T-cell (primary cell): ENCODE measurements at regions of chr5 and their contacts with region 1.

Region 1: DNA sequence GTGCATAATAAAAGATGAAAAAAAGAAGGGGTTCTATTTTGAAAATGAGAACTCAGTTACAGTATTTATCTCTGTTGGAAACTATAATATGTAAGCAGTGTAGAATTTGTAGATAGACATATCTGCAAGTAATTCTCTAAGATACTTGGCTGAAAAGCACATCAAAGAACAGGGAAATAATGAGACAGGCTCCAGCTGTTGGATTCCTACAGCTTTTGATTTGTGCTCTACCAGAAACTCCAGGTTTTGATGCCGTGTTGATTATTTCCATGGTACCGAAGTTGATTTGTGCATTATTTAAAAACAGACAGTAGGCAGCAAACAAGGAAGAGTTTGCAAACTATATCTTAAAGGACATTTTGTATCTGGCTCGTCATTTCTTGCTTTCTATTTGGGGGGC is 2098.7 kb upstream of the WWC1 start:
- DNase-seq: no peak
- ATAC-seq: no peak
- H3K4me3 ChIP-seq: no peak overlapping the region
- H3K4me3 Mint-ChIP-seq: no peak overlapping the region
- H3K27ac ChIP-seq: no peak overlapping the region
- H3K27ac Mint-ChIP-seq: no peak overlapping the region
- H3K4me1 ChIP-seq: no peaks in the 10 kb centered on the region
- H3K4me1 Mint-ChIP-seq: no peaks in the 10 kb centered on the region
- H3K27me3 ChIP-seq: no peaks in the 10 kb centered on the region
- H3K27me3 Mint-ChIP-seq: no peaks in the 10 kb centered on the region

Region 2: GRCh38 chr5:165579911-165580310 is 612.8 kb before region 1 on chr5:
- CTCF ChIA-PET with region 1: no interaction called
- POLR2A ChIA-PET with region 1: no interaction called
- DNase-seq: no peak
- ATAC-seq: no peak
- H3K4me3 ChIP-seq: no peak overlapping the region
- H3K4me3 Mint-ChIP-seq: no peak overlapping the region
- H3K27ac ChIP-seq: no peak overlapping the region
- H3K27ac Mint-ChIP-seq: no peak overlapping the region
- H3K4me1 ChIP-seq: no peaks in the 10 kb centered on the region
- H3K4me1 Mint-ChIP-seq: no peaks in the 10 kb centered on the region
- H3K27me3 ChIP-seq: no peaks in the 10 kb centered on the region
- H3K27me3 Mint-ChIP-seq: no peaks in the 10 kb centered on the region

Region 3: GRCh38 chr5:167177736-167178135 is 985.0 kb after region 1 on chr5:
- CTCF ChIA-PET with region 1: no interaction called
- POLR2A ChIA-PET with region 1: interaction called in 1 of 2 experiments, 13 read pairs
- DNase-seq: no peak
- ATAC-seq: no peak
- H3K4me3 ChIP-seq: no peak overlapping the region
- H3K4me3 Mint-ChIP-seq: no peak overlapping the region
- H3K27ac ChIP-seq: no peak overlapping the region
- H3K27ac Mint-ChIP-seq: no peak overlapping the region
- H3K4me1 ChIP-seq: no peaks in the 10 kb centered on the region
- H3K4me1 Mint-ChIP-seq: no peaks in the 10 kb centered on the region
- H3K27me3 ChIP-seq: no peaks in the 10 kb centered on the region
- H3K27me3 Mint-ChIP-seq: no peaks in the 10 kb centered on the region